Activated CD4-positive, alpha-beta memory T cell treated with anti-CD3 and anti-CD28 coated beads, Interleukin-2, amount 10 ng/mL, durations not matched to agents 7 days and 5 days (primary cell): ENCODE measurements at regions of chr20 and their contacts with region 1.

Region 1: DNA sequence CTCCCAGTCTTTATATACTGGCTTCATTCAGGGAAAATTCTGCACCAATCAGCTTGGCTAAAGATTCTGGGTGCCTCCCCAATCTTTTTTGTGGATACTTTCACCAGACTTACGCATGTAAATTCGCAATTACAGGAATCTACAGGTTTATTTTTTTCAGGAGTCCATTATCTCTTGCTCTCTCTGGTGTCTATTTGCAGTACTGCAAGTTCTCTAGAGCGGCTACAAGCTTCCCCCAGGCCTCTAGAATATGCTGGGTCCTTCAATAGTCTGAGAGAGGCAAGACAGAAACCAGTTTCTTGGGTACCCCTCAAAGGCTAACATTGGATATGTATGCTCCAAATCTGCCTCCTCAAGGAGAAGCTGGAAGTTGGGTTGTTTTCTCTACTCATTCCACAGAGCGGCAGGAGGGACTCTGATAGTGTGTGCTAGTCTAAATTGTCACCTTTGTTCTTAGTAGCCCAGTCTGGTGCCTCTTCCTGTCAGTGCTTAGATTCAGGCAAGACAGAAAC is 58.5 kb downstream of the SUN5 start:
- DNase-seq: no peak
- H3K4me3 Mint-ChIP-seq: no peak overlapping the region
- H3K27ac Mint-ChIP-seq: peak overlapping the region; percentile 18
- H3K4me1 Mint-ChIP-seq: peaks cover 14% of the 10 kb centered on the region
- H3K27me3 Mint-ChIP-seq: no peaks in the 10 kb centered on the region

Region 2: DNA sequence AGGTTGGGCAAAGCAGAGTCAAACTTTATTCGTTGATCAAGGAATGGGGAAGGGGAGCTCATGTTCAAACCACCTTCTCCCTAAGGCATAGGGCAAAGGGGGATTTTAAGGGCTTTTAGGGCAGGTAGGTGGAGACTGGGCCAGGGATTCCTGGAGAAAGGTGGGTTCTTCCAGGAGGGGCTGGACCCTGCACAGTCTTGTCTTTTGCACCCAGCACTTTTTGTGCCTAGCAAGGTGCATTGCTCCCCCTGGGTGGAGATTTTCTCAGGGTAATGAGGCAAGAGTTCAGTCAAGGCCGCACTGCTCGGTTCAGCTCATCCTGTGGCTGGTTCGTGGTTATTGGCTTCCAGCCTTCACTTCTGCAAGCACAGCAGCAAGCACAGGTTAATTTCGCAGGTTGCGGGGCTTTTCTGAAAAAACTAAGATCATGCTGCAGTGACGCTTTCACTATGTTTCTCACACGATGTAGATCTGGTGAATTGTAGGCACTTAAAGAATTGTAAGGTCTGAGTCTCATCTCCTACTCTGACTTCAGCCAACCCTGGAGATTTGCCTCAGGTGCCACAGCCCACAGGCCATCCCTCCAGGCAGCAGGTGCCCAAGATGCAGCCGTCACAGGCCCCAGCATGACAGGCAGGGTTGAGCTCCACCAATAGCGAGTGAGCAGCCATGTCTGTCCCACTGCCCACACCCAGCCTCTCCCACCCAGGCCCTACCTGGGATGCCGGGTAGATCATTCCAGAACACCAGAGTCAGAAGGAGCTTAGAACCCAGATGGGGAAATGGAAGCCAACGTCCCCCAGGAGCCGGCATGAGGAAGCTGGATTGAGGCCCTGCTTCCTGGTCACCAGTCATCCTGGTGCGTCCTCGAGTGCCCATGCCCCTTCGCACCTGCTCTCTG is 21.4 kb after region 1 on chr20:
- CTCF ChIA-PET with region 1: interaction called, 18 read pairs
- POLR2A ChIA-PET with region 1: interaction called, 21 read pairs
- DNase-seq: peak; percentile 80
- H3K4me3 Mint-ChIP-seq: peak overlapping the region; percentile 27
- H3K27ac Mint-ChIP-seq: no peak overlapping the region
- H3K4me1 Mint-ChIP-seq: peaks cover 60% of the 10 kb centered on the region
- H3K27me3 Mint-ChIP-seq: no peaks in the 10 kb centered on the region

Region 3: DNA sequence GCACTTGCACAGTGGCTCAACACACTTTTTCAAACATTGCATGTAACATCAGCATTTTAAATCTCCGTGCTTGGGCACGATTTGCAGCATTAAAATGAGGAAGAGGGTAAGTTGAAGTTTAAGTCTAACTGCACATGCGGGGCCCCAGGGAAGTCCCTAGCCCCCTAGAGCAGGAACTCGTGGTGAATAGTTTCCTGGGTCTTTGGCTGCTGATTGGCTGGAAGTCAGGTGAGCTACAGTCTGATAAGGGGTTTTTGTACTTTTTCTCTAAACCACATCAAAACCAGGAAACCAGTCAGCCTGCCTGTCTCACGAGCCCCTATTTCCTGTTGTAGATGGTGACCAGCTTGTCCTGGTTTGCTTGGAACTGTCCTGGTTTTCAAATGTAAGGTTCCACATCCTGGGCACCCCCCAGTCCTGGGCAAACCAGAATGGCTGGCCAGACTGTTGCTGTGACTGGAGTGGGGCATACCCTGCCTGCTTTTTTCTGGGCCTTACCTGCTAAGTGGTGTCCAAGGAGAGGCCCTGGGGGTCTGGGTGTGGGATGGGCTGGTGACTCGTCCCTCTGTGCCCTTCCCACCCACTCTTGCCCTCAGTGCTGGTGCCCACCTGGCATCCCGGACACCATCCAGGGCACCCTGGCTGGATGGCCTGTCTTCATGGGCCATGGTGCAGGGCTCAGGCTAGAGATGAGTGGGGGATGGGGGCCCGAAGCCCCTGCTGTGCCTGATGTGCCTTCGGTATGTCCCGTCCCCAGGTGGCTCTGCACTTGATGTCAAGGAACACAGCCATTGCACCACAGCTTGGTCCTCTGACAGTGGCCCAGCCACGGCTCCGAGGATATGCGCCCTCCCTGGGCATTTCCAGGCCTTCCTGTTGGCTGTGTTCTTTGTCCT is 26.7 kb after region 1 on chr20:
- CTCF ChIA-PET with region 1: interaction called, 18 read pairs
- POLR2A ChIA-PET with region 1: interaction called, 21 read pairs
- DNase-seq: peak; percentile 84
- H3K4me3 Mint-ChIP-seq: no peak overlapping the region
- H3K27ac Mint-ChIP-seq: no peak overlapping the region
- H3K4me1 Mint-ChIP-seq: peaks cover 52% of the 10 kb centered on the region
- H3K27me3 Mint-ChIP-seq: no peaks in the 10 kb centered on the region

Region 4: DNA sequence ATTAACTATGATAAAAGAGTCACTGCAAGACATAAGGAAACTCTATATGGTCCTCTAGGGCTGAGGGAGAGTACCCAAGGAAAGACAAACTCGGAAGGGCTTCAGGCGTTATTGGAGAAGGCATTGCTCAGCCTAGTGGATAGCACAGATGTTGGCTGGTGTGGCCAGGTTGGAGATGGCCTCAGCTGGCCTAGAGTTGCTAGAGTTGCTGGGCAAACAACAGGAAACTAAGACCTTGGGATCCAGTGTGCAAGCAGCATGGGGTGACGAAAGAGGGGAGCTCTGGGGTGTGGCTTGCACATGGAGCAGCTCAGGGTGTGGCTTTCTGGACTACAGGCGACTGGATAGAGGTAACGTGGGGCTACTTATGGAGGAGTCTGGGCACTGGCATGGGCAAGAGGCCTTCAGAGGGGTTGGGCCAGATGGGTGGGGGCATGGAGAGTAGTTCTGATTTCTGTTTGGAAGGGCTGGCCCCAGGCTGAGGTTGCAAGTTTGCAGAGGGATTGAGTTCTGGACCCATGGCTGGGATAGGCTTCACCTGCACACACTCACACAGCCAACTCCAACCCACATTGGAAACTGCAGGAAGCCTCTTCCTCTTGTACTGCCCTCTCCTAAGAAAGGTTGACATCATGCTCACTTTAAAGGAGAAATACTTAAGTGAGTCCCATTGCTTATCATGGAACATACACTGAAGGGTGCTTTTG is 80.5 kb after region 1 on chr20:
- CTCF ChIA-PET with region 1: no interaction called
- POLR2A ChIA-PET with region 1: no interaction called
- DNase-seq: no peak
- H3K4me3 Mint-ChIP-seq: no peak overlapping the region
- H3K27ac Mint-ChIP-seq: no peak overlapping the region
- H3K4me1 Mint-ChIP-seq: no peaks in the 10 kb centered on the region
- H3K27me3 Mint-ChIP-seq: no peaks in the 10 kb centered on the region

Region 5: DNA sequence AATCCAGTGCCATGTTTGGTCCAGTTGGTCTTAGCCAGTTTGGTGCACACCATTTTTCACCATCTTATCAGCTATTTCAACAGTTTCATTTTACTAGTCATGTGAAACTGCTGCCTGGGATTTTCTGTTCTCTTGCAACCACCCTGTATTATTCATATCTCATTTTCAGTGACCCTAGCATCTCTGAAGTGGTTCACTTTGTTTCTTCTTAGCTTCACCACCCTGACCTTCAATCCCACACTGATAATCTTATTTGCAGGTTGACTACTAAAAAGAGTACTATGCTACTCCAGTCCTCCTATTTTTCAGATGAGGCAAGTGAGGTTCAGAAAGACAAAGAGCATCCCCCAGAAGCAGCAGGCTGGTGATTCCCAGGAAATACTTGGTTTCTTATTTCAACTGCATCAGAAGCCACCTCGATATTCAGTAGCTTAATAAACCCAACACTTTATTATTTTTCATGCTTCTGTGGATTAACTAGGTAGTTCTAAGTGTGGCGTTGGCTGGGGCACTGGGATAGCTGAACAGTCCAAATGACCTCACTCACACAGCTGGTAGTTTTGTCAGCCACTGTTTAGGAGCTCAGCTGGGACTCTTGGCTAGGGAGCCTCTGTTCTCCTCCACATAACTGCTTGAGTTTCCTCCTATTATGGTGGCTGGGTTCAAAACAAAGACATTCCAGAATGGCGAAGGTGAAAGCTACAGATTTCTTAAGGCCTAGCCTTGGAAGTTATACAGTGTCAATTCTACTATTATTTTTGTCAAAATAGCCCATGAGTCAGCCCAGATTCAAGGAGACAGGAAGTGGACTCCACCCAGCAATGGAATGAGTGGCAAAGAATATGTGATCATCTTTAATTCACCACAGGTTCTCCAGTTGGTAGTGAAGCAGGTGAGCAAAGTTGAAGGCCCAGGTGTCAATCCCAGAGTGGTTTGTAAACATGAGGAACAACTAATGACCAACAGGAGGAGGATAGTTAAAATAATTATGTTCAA is 174.3 kb after region 1 on chr20:
- CTCF ChIA-PET with region 1: no interaction called
- POLR2A ChIA-PET with region 1: no interaction called
- DNase-seq: no peak
- H3K4me3 Mint-ChIP-seq: no peak overlapping the region
- H3K27ac Mint-ChIP-seq: peak overlapping the region; percentile 6
- H3K4me1 Mint-ChIP-seq: peaks cover 19% of the 10 kb centered on the region
- H3K27me3 Mint-ChIP-seq: peaks cover 7% of the 10 kb centered on the region